AG04450 (cell line): ENCODE measurements at regions of chr7 and their contacts with region 1.

Region 1: DNA sequence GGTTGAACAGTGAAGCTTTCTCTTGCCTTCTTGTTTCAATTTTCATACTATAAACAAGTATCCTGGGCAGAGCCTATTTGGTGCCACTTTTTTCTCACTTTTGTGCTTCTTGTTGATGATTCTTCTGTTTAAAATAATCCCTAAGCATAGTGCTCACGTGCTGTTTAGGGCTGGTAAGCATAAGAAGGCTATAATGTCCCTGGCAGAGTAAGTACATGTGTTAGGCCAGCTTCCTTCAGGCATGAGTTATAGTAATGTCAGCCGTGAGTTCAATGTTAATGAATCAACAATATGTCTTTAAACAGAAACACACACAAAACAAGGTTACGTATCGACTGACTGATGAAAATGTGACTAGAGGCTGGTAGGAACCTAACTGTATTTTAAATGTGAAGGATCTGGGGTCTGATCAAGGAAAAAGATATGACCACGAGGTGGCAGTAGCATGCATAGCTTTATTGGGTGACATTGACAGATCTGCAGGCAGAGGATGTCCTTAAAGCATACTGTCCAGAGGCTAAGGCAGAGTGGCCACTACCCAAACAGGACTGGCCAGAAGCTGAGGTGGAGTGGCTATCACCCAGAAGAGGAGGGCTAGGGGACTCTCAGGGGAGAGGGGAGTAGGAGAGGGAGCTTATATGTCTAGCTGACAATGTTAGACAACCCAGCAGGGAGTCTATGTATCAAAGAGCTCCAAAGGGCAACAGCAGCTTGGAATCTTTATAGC is 113.7 kb downstream of the BRAF start:
- DNase-seq: peak; percentile 36
- H3K4me3 ChIP-seq: no peak overlapping the region
- H3K27ac ChIP-seq: no peak overlapping the region
- H3K27me3 ChIP-seq: no peaks in the 10 kb centered on the region
- CTCF ChIP-seq: peak; percentile 73

Region 2: GRCh38 chr7:140673063-140673773 is 137.8 kb before region 1 on chr7:
- CTCF ChIA-PET with region 1: interaction called, 10 read pairs
- POLR2A ChIA-PET with region 1: no interaction called
- DNase-seq: no peak
- H3K4me3 ChIP-seq: peak overlapping the region; percentile 64
- H3K27ac ChIP-seq: no peak overlapping the region
- H3K27me3 ChIP-seq: no peaks in the 10 kb centered on the region
- CTCF ChIP-seq: no peak

Region 3: DNA sequence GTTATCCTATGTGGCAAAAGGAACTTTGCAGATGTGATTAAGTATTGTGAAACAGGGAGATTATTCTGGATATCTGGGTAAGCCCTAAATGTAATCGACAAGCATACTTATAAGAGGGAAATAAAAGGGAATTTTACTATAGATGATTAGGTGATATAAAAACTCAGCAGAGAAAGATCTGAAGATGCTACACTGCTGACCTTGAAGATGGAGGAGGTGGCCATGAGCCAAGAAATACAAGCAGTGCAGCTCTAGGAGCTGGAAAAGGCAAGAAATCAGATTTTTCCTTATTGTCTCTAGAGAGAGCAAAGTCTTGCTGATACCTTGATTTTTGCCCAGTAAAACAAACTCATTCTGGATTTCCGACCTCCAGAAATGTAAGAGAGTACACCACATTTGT is 46.1 kb after region 1 on chr7:
- CTCF ChIA-PET with region 1: interaction called, 11 read pairs
- POLR2A ChIA-PET with region 1: no interaction called
- DNase-seq: no peak
- H3K4me3 ChIP-seq: no peak overlapping the region
- H3K27ac ChIP-seq: no peak overlapping the region
- H3K27me3 ChIP-seq: no peaks in the 10 kb centered on the region
- CTCF ChIP-seq: no peak

Region 4: DNA sequence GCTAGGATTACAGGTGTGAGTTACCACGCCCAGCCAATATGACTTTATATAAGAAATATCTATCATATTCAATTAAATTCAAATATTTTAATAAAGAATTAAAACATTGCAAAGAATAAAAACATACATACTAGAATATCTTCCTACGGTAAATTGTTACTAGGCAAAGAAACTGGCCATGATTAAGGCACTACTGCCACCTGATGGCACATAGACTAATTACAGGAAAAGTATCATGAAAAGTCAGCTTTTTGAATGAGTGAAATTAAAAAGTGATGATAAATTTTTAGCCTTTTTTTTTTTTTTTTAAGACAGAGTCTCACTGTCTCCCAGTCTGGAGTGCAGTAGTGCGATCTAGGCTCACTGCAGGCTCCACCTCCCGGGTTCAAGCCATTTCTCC is 172.8 kb after region 1 on chr7:
- CTCF ChIA-PET with region 1: interaction called, 12 read pairs
- POLR2A ChIA-PET with region 1: no interaction called
- DNase-seq: no peak
- H3K4me3 ChIP-seq: no peak overlapping the region
- H3K27ac ChIP-seq: no peak overlapping the region
- H3K27me3 ChIP-seq: no peaks in the 10 kb centered on the region
- CTCF ChIP-seq: 0 out of 2 replicates have a peak, but pooled peaks have one; percentile 8

Region 5: GRCh38 chr7:141541375-141541774 is 730.4 kb after region 1 on chr7:
- CTCF ChIA-PET with region 1: no interaction called
- POLR2A ChIA-PET with region 1: no interaction called
- DNase-seq: no peak
- H3K4me3 ChIP-seq: no peak overlapping the region
- H3K27ac ChIP-seq: no peak overlapping the region
- H3K27me3 ChIP-seq: no peaks in the 10 kb centered on the region
- CTCF ChIP-seq: no peak

Region 6: GRCh38 chr7:141654551-141654950 is 843.6 kb after region 1 on chr7:
- CTCF ChIA-PET with region 1: interaction called, 21 read pairs
- POLR2A ChIA-PET with region 1: no interaction called
- DNase-seq: peak; percentile 33
- H3K4me3 ChIP-seq: no peak overlapping the region
- H3K27ac ChIP-seq: no peak overlapping the region
- H3K27me3 ChIP-seq: no peaks in the 10 kb centered on the region
- CTCF ChIP-seq: peak; percentile 84